ENCODE measurements at regions of chr3 and their contacts with region 1.

Region 1: GRCh38 chr3:114418724-114419543 is 125.1 kb downstream of the TIGIT start:
- DNase-seq: peak; percentile 57
- ATAC-seq: peak; percentile 90
- H3K4me3 ChIP-seq: no peak overlapping the region
- H3K27ac ChIP-seq: peak overlapping the region; percentile 19; the same call in 1 of the 2 replicates
- H3K4me1 ChIP-seq: peaks cover 8 to 49% of the 10 kb centered on the region in 2 experiments
- H3K27me3 ChIP-seq: no peaks in the 10 kb centered on the region
- CTCF ChIP-seq: peak; percentile 38 to 90 (median 66); a peak in 5 of 6 replicates
- POLR2A ChIP-seq: no peak
- RAD21 ChIP-seq: peak; percentile 68

Region 2: GRCh38 chr3:114383875-114384557 is 34.9 kb before region 1 on chr3:
- CTCF ChIA-PET with region 1: interaction called, 22 read pairs
- POLR2A ChIA-PET with region 1: no interaction called
- RAD21 ChIA-PET with region 1: no interaction called
- intact Hi-C with region 1: loop called (anchors 2 kb)
- DNase-seq: peak; percentile 47
- ATAC-seq: peak; percentile 85
- H3K4me3 ChIP-seq: no peak overlapping the region
- H3K27ac ChIP-seq: peak overlapping the region; percentile 41; the same call in 1 of the 2 replicates
- H3K4me1 ChIP-seq: peaks cover 26 to 58% of the 10 kb centered on the region in 2 experiments
- H3K27me3 ChIP-seq: no peaks in the 10 kb centered on the region
- CTCF ChIP-seq: peak; percentile 52 to 95 (median 94); a peak in 5 of 6 replicates
- POLR2A ChIP-seq: no peak
- RAD21 ChIP-seq: peak; percentile 92

Region 3: GRCh38 chr3:114400371-114400770 is 18.6 kb before region 1 on chr3:
- CTCF ChIA-PET with region 1: interaction called, 49 read pairs
- POLR2A ChIA-PET with region 1: no interaction called
- RAD21 ChIA-PET with region 1: no interaction called
- intact Hi-C with region 1: no loop called
- DNase-seq: no peak
- ATAC-seq: peak; percentile 2; the same call in 1 of the 2 replicates
- H3K4me3 ChIP-seq: no peak overlapping the region
- H3K27ac ChIP-seq: no peak overlapping the region
- H3K4me1 ChIP-seq: peaks cover 25 to 67% of the 10 kb centered on the region in 2 experiments
- H3K27me3 ChIP-seq: no peaks in the 10 kb centered on the region
- CTCF ChIP-seq: no peak
- POLR2A ChIP-seq: no peak
- RAD21 ChIP-seq: no peak

Region 4: DNA sequence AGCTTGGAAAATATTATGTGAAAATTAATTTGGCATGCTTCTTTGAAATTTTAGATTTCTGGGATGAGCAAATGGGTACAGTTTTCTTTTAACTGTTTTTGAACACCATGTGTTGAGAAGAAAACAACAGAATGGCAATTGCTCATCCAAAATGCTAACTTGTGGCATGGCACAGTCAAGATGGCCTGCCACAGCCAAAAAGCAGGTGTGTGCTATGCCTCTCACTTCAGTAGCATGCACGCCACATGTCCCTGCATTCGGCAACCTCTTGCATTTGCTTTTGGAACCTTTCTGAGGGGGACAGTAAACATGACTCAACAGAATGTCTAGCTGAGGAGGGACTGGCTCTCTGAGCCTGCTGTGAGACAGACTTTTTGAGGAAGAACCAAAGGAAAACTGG is 13.4 kb after region 1 on chr3:
- CTCF ChIA-PET with region 1: interaction called, 11 read pairs
- POLR2A ChIA-PET with region 1: no interaction called
- RAD21 ChIA-PET with region 1: no interaction called
- intact Hi-C with region 1: no loop called
- DNase-seq: no peak
- ATAC-seq: no peak
- H3K4me3 ChIP-seq: no peak overlapping the region
- H3K27ac ChIP-seq: no peak overlapping the region
- H3K4me1 ChIP-seq: peaks cover 11 to 37% of the 10 kb centered on the region in 2 experiments
- H3K27me3 ChIP-seq: no peaks in the 10 kb centered on the region
- CTCF ChIP-seq: no peak
- POLR2A ChIP-seq: no peak
- RAD21 ChIP-seq: no peak